Activated naive CD4-positive, alpha-beta T cell treated with anti-CD3 and anti-CD28 coated beads for 36 hours (primary cell): ENCODE measurements at regions of chr6 and their contacts with region 1.

Region 1: DNA sequence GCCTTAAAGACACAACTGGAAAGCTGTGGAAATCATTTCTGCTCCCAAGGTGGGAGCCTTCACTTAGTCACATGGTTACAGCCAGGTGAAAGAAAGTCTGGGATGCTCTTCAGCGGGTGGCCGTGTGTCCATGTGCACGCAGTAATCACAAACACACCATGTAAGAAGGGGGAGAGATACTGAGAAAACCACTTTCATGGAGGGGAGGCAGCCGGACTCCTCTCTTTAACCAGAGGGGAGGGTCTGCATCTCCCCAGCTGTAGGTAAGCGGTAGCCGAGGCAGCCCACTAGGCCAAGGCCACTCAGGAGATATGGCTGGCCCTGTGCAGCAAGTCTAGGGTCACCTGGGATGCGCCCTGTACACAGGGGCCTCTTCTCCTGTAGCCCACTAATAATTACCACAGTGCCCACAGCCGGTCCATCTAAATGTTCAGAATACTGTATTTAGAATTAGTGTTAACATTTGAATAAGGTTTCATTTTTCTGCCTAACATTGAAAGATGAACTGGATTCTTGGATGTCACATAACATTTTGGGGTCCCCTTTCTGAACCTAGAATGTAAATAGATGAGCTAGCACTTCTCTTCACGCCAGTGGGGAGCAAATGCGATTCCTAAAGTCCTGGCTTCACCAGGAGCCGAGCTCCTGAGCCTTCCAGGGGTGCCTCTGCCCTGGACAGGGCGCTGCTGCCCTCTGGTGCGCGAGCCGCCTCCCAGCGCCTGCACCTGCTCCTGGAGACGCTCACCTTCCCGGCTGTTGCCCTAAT is 15.9 kb downstream of the GPR31 start:
- DNase-seq: peak; percentile 62
- H3K4me3 Mint-ChIP-seq: no peak overlapping the region
- H3K27ac Mint-ChIP-seq: no peak overlapping the region
- H3K4me1 Mint-ChIP-seq: peaks cover 2% of the 10 kb centered on the region
- H3K27me3 Mint-ChIP-seq: peaks cover 4% of the 10 kb centered on the region

Region 2: GRCh38 chr6:165704045-165704748 is 1437.7 kb before region 1 on chr6:
- CTCF ChIA-PET with region 1: no interaction called
- intact Hi-C with region 1: no loop called
- DNase-seq: no peak
- H3K4me3 Mint-ChIP-seq: no peak overlapping the region
- H3K27ac Mint-ChIP-seq: no peak overlapping the region
- H3K4me1 Mint-ChIP-seq: no peaks in the 10 kb centered on the region
- H3K27me3 Mint-ChIP-seq: no peaks in the 10 kb centered on the region

Region 3: GRCh38 chr6:166786704-166787293 is 355.1 kb before region 1 on chr6:
- CTCF ChIA-PET with region 1: interaction called, 4 read pairs
- intact Hi-C with region 1: loop called (anchors 1 kb)
- DNase-seq: peak; percentile 24
- H3K4me3 Mint-ChIP-seq: no peak overlapping the region
- H3K27ac Mint-ChIP-seq: no peak overlapping the region
- H3K4me1 Mint-ChIP-seq: no peaks in the 10 kb centered on the region
- H3K27me3 Mint-ChIP-seq: no peaks in the 10 kb centered on the region

Region 4: DNA sequence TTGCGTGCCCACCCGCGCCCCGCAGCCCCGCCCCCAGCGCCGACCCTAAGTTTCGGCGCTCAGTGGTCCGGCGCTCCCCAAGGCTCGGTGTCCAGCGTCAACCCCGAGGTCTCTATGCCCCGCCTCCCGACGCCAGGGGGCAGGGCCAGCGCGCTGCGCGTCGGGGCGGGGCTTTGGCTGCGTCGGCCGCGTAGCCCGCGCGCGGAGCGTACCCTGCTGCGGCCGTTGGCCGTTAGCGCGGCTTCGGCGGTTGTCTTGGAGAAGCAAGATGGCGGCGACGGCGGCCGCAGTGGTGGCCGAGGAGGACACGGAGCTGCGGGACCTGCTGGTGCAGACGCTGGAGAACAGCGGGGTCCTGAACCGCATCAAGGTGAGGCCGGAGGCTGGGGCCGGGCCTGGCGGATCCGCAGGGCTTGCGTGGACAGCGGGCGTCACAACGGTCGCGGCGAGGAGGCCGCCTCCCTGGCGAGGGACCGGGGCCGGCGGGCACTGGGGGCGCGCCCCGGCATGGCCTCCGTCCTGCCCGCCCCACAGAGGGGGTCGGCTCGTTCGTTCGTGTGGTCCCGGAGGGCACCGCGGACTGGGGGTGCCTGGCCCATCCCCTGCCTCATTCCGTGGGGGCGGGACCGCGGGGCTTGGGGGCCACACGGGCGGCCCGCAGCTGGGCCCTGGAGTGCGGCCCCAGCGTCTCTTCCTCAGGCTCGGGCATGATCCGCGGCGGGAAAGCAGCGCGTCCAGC is 142.5 kb before region 1 on chr6 and contains the start of gene CEP43:
- CTCF ChIA-PET with region 1: interaction called, 4 read pairs
- intact Hi-C with region 1: loop called (anchors 1 kb)
- DNase-seq: peak; percentile 82
- H3K4me3 Mint-ChIP-seq: peak within 1 kb of the TSS; percentile 86
- H3K27ac Mint-ChIP-seq: peak within 1 kb of the TSS; percentile 74
- H3K4me1 Mint-ChIP-seq: peaks cover 26% of the 10 kb centered on the region
- H3K27me3 Mint-ChIP-seq: no peaks in the 10 kb centered on the region
- total RNA-seq, gene CEP43: 19.6 to 20.3 TPM

Region 5: DNA sequence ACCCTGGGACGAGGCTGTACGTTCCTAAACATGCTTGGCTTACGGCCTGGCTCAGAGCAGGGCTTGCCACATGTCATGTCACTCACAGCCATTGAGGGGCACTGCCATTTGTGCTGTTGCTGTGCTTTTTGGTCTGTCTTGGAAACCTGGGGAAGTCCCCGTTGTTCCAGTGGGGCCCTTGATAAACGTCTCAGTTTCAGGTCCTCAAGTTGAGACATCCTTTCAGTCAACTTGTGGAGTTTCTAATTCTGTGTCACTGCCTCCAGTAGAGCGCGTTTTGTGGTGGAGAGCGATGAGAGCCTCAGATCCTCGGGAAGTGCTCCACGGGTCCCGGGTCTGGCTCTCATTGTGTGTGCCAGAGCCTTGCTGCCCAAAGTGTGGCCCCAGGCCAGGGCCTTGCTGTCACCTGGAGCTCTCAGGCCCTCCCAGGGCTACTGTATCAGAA is 62.0 kb before region 1 on chr6:
- CTCF ChIA-PET with region 1: no interaction called
- intact Hi-C with region 1: loop called (anchors 1 kb)
- DNase-seq: peak; percentile 77
- H3K4me3 Mint-ChIP-seq: no peak overlapping the region
- H3K27ac Mint-ChIP-seq: no peak overlapping the region
- H3K4me1 Mint-ChIP-seq: peaks cover 22% of the 10 kb centered on the region
- H3K27me3 Mint-ChIP-seq: peaks cover 7% of the 10 kb centered on the region

Region 6: DNA sequence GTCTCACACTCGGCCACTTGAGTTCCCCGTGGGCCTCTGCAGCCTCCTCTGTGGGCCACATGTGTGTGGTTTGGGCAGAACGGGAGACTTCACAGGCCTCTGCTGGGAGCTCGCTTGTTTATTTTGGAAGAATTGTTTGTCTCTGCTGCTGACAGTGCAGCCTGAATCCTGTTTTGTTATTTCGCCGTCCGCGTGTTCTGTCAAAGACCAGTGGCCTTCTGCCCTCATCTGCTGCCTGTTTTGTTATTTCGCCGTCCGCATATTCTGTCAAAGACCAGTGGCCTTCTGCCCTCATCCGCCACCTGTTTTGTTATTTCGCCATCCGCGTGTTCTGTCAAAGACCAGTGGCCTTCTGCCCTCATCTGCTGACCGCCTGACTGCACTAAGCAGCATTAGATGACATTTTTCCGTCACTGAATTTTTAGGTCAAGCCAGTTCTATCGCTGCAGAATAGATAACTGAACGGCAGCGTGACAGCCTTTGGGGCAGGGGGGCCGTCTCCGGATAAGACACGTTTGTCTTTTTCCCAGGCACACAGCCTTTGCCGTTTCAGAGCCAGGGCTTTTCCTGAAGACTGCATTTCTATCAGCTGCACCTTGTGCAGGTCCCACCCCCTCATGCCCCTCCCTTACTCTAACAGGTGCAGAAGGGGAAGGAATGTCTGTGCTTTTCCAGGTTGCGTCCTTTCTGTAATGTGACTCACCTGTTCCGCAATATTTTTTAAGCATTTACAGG is 526.3 kb after region 1 on chr6:
- CTCF ChIA-PET with region 1: no interaction called
- intact Hi-C with region 1: no loop called
- DNase-seq: no peak
- H3K4me3 Mint-ChIP-seq: no peak overlapping the region
- H3K27ac Mint-ChIP-seq: no peak overlapping the region
- H3K4me1 Mint-ChIP-seq: no peaks in the 10 kb centered on the region
- H3K27me3 Mint-ChIP-seq: peaks cover 5% of the 10 kb centered on the region